Motor neuron (in vitro differentiated cells): ENCODE measurements at regions of chr18 and their contacts with region 1.

Region 1: DNA sequence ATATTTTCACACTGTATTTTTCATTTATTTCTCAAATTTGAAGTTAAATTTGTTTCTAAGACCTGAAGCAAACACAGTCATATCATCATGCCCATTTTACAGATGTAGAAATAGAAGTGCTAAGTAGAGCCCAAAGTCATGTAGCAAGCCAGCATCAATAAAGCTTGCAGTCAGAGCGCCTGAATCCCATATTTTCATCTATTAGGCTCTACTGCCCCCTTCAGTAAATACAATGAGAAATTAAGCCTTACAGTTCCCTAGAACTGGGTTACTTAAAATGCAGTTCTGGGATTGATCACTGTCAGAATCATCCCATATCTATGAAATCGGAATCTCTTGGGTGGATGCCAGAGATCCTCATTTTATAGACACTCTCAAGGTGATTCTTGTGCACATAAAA is 419.9 kb downstream of the TGIF1 start:
- ATAC-seq: peak in 4 of 8 experiments; percentile 52 to 88 (median 80)
- H3K4me3 ChIP-seq: no peak overlapping the region
- H3K27ac ChIP-seq: no peak overlapping the region
- H3K4me1 ChIP-seq: peaks cover 12 to 24% of the 10 kb centered on the region in 2 donors

Region 2: DNA sequence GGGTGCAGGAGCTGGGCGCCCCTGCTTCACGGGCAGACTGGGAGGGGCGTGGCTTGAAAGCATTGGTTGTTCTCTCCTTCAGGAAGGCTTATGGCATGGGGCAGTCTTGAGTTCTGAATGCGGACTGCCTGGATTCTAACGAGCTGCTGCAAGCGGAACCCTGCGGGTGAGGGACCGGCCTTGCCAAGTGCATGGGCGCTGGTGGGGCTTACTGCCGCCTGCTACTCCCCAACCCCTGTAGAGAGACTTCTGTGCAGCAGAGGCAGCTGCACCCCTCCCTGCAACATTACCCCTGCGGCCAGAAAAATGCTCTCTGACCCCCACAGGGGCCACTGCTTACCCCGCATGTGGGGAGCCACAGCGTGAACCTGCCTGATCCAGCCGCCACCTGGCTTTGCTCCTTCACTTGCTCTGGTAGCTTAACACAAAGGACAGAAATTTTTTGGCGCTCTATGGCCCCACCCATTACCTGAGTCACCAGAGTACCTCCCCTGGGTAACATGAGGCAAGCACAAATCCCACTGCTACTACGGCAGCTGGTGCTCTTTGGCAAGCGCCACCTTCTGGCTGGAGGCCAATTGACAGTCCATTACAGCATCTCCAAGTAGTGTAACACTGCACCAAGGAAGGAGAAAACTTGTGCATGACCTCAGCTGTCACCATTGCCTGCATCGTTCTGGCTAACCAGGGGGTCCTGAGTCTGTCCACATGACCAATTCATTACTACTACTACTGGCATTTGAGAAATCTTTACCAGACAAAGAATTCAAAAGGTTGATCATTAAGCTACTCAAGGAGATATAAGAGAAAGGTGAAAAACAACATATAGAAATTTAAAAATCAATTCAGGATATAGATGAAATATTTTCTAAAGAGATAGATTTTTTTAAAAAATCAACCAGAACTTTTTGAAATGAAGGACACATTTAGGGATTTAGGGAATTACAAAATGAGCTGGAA is 572.5 kb before region 1 on chr18:
- in situ Hi-C with region 1: loop called in 1 of 9 experiments (anchors 25 kb)
- ATAC-seq: peak in 6 of 8 experiments; percentile 89 to 99 (median 94)
- H3K4me3 ChIP-seq: peak overlapping the region; percentile 1 to 43 (median 26)
- H3K27ac ChIP-seq: no peak overlapping the region
- H3K4me1 ChIP-seq: no peaks in the 10 kb centered on the region

Region 3: DNA sequence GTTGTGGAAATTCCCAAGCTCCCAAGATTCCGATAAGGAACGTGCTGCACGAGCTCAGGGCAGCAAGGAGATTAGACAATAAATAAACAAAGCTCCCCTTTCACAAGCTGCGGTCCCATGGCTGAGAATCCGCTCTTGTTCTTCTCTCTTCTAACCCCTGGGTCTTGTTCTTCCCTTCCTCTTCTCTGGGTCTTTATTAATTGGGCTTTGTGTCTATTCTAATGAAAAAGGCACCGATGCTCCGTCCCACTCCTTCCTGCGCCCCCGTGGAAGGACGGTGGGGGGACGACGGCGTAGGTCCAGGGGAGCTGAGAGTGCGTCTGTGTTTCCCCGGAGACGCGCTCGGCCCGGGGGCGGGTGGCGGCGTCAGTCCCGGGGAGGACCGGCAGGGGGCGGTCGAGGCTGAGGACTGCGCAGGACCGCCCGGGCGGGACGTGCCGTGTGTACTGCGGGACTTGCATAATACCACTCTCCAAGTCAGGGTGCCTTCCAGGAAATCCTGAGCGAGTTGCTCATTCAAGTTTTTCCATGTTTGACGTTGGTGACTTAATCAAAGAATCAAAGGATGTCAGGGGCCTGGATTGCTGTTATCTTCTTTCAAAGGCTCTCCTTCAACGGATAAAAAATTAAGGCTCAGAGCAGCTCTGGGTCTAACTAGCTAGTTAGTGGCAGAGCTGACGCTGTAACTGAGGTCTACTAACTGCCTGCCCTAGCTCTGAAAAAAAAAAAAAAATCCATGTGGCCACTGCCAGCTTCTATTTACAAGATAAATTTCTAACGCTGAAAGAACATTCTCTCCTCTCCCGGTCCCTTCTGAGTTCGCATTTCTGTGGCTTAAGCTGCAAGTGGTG is 98.5 kb before region 1 on chr18:
- in situ Hi-C with region 1: loop called in 1 of 9 experiments (anchors 10 kb)
- ATAC-seq: peak; percentile 98 to 100 (median 99)
- H3K4me3 ChIP-seq: peak overlapping the region; percentile 19 to 35 (median 28)
- H3K27ac ChIP-seq: no peak overlapping the region
- H3K4me1 ChIP-seq: peaks cover 0 to 3% of the 10 kb centered on the region in 2 donors